ENCODE measurements at regions of chr16 and their contacts with region 1.

Region 1: DNA sequence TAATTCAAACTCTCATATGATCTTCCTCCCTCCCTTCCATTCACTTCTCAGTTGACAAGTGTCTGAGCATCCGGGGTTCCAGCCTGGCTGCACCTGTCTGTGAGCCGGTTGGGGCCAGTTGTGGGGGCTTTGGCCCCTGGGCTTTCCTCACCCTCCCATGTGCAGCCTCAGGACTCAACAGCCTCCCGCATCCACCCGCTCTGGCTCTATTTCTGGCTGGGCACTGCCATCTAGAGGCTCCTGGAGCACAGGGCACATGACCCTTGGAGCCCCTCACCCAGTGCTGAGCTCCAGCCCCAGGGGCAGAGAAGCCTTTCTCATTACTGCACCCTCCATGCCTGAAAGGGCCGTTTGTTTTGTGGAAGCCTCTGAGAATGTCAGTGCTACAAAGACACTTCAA is 43.3 kb downstream of the HAPSTR1 start:
- DNase-seq: peak; percentile 52
- ATAC-seq: peak; percentile 73
- H3K4me3 Mint-ChIP-seq: peak overlapping the region; percentile 15
- H3K27ac Mint-ChIP-seq: peak overlapping the region; percentile 53
- H3K4me1 Mint-ChIP-seq: peaks cover 38% of the 10 kb centered on the region
- H3K27me3 Mint-ChIP-seq: no peaks in the 10 kb centered on the region
- CTCF ChIP-seq: peak; percentile 41

Region 2: DNA sequence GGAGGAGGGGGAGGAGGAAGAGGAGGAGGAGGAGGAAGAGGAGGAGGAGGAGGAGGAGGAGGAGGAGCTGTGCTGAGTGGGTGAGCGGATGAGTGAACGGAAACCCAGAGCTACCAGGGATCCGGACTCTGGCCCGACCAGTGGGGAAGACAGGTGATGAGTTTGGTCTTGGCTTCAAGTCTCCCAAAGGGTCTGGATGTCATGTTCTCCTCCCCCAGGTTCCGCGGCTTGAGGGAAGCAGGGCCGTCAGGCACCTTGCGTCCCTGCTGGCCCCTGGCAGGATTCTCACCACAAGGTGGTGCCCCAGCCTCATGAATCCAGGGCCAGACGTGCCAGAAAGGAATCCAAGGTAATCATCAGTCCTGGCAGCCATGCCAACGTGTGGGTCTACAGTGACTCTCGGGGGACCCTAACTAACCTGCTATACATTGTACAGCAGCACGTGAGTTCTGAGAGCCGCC is 473.9 kb before region 1 on chr16:
- CTCF ChIA-PET with region 1: no interaction called
- POLR2A ChIA-PET with region 1: no interaction called
- intact Hi-C with region 1: loop called (anchors 1 kb)
- DNase-seq: no peak
- ATAC-seq: peak; percentile 45
- H3K4me3 Mint-ChIP-seq: no peak overlapping the region
- H3K27ac Mint-ChIP-seq: no peak overlapping the region
- H3K4me1 Mint-ChIP-seq: no peaks in the 10 kb centered on the region
- H3K27me3 Mint-ChIP-seq: no peaks in the 10 kb centered on the region
- CTCF ChIP-seq: no peak

Region 3: GRCh38 chr16:8892101-8892575 is 242.6 kb before region 1 on chr16:
- CTCF ChIA-PET with region 1: interaction called, 16 read pairs
- POLR2A ChIA-PET with region 1: interaction called, 17 read pairs
- intact Hi-C with region 1: loop called (anchors 1 kb)
- DNase-seq: peak; percentile 34
- ATAC-seq: peak; percentile 5
- H3K4me3 Mint-ChIP-seq: peak overlapping the region; percentile 68
- H3K27ac Mint-ChIP-seq: peak overlapping the region; percentile 91
- H3K4me1 Mint-ChIP-seq: peaks cover 39% of the 10 kb centered on the region
- H3K27me3 Mint-ChIP-seq: no peaks in the 10 kb centered on the region
- CTCF ChIP-seq: no peak

Region 4: GRCh38 chr16:8963825-8964441 is 170.8 kb before region 1 on chr16 and contains the start of gene USP7:
- CTCF ChIA-PET with region 1: interaction called, 5 read pairs
- POLR2A ChIA-PET with region 1: interaction called, 3 read pairs
- intact Hi-C with region 1: loop called (anchors 5 kb)
- DNase-seq: peak; percentile 90
- ATAC-seq: peak; percentile 90
- H3K4me3 Mint-ChIP-seq: peak within 1 kb of the TSS; percentile 81
- H3K27ac Mint-ChIP-seq: peak within 1 kb of the TSS; percentile 93
- H3K4me1 Mint-ChIP-seq: peaks cover 35% of the 10 kb centered on the region
- H3K27me3 Mint-ChIP-seq: no peaks in the 10 kb centered on the region
- CTCF ChIP-seq: no peak
- total RNA-seq, gene USP7: 173 and 193 TPM in 2 replicates

Region 5: DNA sequence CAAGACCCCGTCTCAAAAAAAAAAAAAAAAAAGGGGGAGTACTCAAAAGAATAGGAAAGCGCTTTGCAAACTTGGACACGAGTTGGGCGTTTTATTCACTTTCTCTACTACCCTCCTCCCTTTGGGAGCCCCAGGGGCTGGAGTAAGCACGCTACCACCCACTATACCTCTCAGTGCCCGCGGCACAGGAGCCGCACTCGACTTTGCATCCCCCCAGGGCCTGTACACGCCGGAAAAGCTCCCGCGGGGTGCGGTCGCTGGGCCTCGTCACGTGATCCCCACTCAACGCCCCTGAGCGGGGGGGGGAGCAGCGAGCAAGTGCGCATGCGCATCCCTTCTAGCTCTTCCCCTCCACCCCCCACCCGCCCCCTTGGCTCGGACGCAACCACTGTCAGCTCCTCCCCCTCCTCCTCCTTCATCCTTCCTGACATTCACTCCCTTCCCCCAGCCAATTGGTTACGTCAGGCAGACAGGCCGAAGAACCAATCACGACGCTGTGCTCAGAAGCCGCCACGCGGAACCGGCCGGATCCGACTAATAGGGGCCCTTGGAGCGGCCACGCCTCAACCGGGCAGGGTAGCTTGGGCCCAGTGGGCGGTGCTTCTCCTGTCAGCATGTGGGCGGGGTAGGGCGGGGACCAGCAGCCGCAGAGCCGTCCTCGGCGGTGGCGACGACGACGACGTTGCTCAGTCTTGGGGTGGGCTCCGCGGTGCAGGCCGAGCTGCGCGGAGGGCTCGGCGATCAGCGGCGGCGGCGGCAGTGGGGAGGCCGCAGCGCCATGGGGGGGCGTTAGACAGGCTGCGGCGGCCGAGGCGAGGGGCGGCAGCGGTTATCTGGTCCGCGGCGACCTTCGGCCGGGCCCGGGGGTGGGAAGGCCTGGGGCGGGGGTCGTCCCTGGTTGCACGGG is 43.5 kb before region 1 on chr16 and contains the start of gene HAPSTR1:
- CTCF ChIA-PET with region 1: interaction called, 3 read pairs
- POLR2A ChIA-PET with region 1: interaction called, 26 read pairs
- intact Hi-C with region 1: loop called (anchors 2 kb)
- DNase-seq: peak; percentile 95
- ATAC-seq: peak; percentile 84
- H3K4me3 Mint-ChIP-seq: peak within 1 kb of the TSS; percentile 99
- H3K27ac Mint-ChIP-seq: peak within 1 kb of the TSS; percentile 98
- H3K4me1 Mint-ChIP-seq: peaks cover 51% of the 10 kb centered on the region
- H3K27me3 Mint-ChIP-seq: no peaks in the 10 kb centered on the region
- CTCF ChIP-seq: no peak
- total RNA-seq, gene HAPSTR1: 77.0 and 85.6 TPM in 2 replicates

Region 6: DNA sequence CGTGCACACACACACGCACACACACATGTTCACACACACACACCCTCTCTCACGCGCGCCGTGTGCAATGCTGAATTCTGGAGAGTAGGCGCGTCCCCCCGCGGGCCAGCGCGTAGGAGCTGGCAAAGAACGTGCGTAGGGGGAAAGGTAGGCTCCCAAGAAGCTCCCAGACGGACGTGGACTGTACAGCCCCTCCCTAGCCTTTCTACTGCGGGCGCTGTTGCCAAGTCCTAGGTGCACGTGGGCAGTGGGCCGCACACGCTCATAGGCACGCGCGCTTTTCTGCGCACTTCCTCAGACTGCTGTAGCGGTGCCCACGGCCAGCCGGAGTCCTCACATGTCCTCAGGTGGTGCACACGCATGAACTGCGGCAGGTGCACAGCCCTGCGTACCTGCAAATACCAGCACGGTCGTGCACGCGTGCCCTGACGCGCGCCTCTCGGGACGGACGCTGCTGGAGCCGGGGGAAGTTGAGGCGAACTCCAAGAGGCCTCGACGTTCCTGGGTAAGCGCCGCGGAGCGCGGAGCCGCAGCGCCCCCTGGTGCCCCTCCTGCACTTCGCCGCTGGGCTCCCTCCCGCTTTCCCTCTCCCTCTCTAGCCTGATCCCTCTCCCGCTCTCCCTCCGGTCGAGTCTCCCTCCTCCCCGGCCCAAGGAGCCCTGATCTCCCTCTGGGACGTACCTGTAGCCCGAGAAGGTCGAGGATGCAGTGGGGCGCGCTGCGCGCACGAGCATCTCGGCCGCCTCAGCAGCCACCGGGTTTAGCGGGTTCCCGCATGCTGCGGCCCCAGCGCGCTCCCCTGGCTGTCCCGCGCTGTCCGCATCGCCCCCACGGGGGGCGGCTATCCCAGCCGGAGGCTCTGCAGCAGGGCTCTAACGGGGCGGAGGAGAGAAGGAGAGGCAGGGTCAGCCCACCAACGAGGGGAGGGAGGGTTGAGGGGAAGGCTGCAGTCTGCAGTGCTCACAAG is 1046.7 kb after region 1 on chr16:
- CTCF ChIA-PET with region 1: no interaction called
- POLR2A ChIA-PET with region 1: no interaction called
- intact Hi-C with region 1: loop called (anchors 1 kb)
- DNase-seq: peak; percentile 59
- ATAC-seq: peak; percentile 46
- H3K4me3 Mint-ChIP-seq: peak overlapping the region; percentile 78
- H3K27ac Mint-ChIP-seq: no peak overlapping the region
- H3K4me1 Mint-ChIP-seq: peaks cover 24% of the 10 kb centered on the region
- H3K27me3 Mint-ChIP-seq: peaks cover 57% of the 10 kb centered on the region
- CTCF ChIP-seq: peak; percentile 54

Measured in activated B cell treated with CpG ODN at 0.5 μM for 24 hours (primary cell).